ENCODE measurements at regions of chr1 and their contacts with region 1.

Region 1: GRCh38 chr1:156054500-156055280 is at the start of gene LAMTOR2:
- DNase-seq: peak; percentile 90 to 98 (median 94)
- ATAC-seq: peak; percentile 78
- H3K4me3 ChIP-seq: peak within 1 kb of the TSS; percentile 85 to 96
- H3K4me3 Mint-ChIP-seq: peak within 1 kb of the TSS; percentile 92
- H3K27ac ChIP-seq: peak within 1 kb of the TSS; percentile 54 to 79
- H3K27ac Mint-ChIP-seq: peak within 1 kb of the TSS; percentile 84
- H3K4me1 ChIP-seq: peaks cover 11% of the 10 kb centered on the region
- H3K4me1 Mint-ChIP-seq: peaks cover 31% of the 10 kb centered on the region
- H3K27me3 ChIP-seq: no peaks in the 10 kb centered on the region
- H3K27me3 Mint-ChIP-seq: no peaks in the 10 kb centered on the region
- CTCF ChIP-seq: no peak
- total RNA-seq, gene LAMTOR2: 6.7 to 8.3 TPM

Region 2: DNA sequence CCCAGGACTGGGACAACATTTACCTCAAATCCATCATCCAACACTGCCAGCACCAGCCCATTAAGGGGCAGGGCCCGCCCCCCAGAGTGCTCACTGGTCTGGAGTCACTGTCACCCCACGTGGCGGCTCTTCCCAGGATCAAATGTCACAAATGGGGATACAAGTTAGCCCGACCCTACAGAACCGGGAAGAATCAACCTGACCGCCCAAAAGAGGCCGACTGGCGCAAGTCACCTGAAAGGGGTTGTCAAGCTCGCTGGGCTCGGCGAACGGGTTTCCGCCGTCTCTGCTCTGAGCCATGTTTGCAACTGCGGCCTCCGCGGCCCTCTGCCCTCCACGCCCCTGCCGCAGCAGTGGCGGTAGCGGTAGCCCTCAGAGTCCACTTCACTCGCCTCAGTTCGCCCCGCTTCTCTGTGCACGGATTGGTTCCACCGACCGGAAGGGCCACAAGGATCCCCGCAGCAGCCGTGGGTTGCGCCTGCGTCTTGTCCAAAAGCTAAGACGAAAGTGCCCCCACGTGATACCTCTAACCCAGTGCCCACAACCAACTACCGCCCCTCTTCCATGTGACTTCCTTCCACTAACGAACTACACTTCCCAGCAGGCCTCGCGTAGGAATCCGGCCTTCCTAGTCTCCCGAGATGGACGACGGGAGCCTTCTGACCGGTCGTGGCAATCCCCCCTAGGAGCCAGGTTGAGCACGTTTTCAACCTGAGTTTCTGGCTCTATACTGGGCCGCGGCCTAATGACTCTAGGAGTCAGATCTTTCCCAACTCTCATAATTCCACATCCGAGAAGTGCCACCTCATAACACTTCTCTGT is 792.6 kb before region 1 on chr1 and contains the start of gene SCAMP3:
- CTCF ChIA-PET with region 1: no interaction called
- POLR2A ChIA-PET with region 1: no interaction called
- intact Hi-C with region 1: loop called in 1 of 2 experiments (anchors 5 kb)
- DNase-seq: peak; percentile 61 to 96 (median 84)
- ATAC-seq: peak; percentile 95
- H3K4me3 ChIP-seq: peak within 1 kb of the TSS; percentile 79 to 86
- H3K4me3 Mint-ChIP-seq: peak within 1 kb of the TSS; percentile 100
- H3K27ac ChIP-seq: peak within 1 kb of the TSS; percentile 72 to 85
- H3K27ac Mint-ChIP-seq: peak within 1 kb of the TSS; percentile 97
- H3K4me1 ChIP-seq: peaks cover 16% of the 10 kb centered on the region
- H3K4me1 Mint-ChIP-seq: peaks cover 29% of the 10 kb centered on the region
- H3K27me3 ChIP-seq: no peaks in the 10 kb centered on the region
- H3K27me3 Mint-ChIP-seq: no peaks in the 10 kb centered on the region
- CTCF ChIP-seq: no peak
- total RNA-seq, gene SCAMP3: 47.5 to 48.5 TPM

Region 3: GRCh38 chr1:155323798-155324610 is 730.7 kb before region 1 on chr1:
- CTCF ChIA-PET with region 1: no interaction called
- POLR2A ChIA-PET with region 1: no interaction called
- intact Hi-C with region 1: loop called in 1 of 2 experiments (anchors 2 kb)
- DNase-seq: peak; percentile 66 to 94 (median 85)
- ATAC-seq: peak; percentile 81
- H3K4me3 ChIP-seq: peak overlapping the region; percentile 89 to 100
- H3K4me3 Mint-ChIP-seq: peak overlapping the region; percentile 90
- H3K27ac ChIP-seq: peak overlapping the region; percentile 69 to 90
- H3K27ac Mint-ChIP-seq: peak overlapping the region; percentile 55
- H3K4me1 ChIP-seq: peaks cover 34% of the 10 kb centered on the region
- H3K4me1 Mint-ChIP-seq: peaks cover 33% of the 10 kb centered on the region
- H3K27me3 ChIP-seq: no peaks in the 10 kb centered on the region
- H3K27me3 Mint-ChIP-seq: no peaks in the 10 kb centered on the region
- CTCF ChIP-seq: no peak

Region 4: DNA sequence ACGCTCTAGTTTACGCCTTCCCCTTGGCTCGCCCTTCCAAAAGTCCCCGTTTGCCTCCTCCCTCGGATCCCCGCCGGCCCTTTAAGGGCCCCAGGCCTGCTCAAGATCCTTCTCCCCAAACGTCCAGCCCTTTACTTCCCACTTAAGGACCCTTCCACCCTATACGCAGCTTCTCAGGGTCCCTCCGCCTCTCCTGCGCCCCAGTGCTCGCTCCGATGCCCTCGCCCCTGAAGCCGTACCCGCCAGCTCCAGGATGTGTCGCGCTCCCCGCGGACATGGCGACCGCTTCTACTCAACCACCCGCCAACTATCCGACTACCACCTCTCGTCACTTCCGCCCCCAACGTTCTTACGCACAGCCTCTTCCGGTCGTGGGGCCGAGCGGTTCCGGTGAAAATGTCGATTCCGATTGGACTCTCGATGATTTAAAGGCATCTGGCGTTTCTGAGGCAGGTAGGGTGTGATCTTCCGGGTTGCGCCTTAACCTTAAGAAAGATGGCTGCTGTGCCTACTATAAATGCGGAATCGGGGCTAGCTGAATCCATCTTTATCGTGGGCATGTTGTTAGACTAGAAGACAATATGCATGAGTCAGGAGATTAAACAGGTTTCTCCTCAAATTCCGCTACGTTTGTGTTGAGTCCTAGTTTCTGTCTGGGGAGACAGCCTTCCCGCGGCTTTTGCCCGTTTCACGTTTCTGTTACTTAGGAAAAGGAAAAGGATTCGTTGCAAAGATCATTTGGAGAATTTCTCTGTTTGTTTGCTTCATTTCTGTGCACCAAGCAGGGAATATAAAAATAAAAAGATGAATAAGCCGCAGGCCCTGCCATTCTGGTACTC is 120.4 kb before region 1 on chr1 and contains the start of gene KHDC4:
- CTCF ChIA-PET with region 1: no interaction called
- POLR2A ChIA-PET with region 1: no interaction called
- intact Hi-C with region 1: loop called (anchors 1 kb)
- DNase-seq: peak; percentile 88 to 100 (median 93)
- ATAC-seq: peak; percentile 92
- H3K4me3 ChIP-seq: peak within 1 kb of the TSS; percentile 83 to 96
- H3K4me3 Mint-ChIP-seq: no peak within 1 kb of the TSS
- H3K27ac ChIP-seq: peak within 1 kb of the TSS; percentile 89 to 98
- H3K27ac Mint-ChIP-seq: no peak within 1 kb of the TSS
- H3K4me1 ChIP-seq: peaks cover 39% of the 10 kb centered on the region
- H3K4me1 Mint-ChIP-seq: peaks cover 34% of the 10 kb centered on the region
- H3K27me3 ChIP-seq: no peaks in the 10 kb centered on the region
- H3K27me3 Mint-ChIP-seq: no peaks in the 10 kb centered on the region
- CTCF ChIP-seq: peak; percentile 32
- total RNA-seq, gene KHDC4: 47.4 to 54.6 TPM

Region 5: DNA sequence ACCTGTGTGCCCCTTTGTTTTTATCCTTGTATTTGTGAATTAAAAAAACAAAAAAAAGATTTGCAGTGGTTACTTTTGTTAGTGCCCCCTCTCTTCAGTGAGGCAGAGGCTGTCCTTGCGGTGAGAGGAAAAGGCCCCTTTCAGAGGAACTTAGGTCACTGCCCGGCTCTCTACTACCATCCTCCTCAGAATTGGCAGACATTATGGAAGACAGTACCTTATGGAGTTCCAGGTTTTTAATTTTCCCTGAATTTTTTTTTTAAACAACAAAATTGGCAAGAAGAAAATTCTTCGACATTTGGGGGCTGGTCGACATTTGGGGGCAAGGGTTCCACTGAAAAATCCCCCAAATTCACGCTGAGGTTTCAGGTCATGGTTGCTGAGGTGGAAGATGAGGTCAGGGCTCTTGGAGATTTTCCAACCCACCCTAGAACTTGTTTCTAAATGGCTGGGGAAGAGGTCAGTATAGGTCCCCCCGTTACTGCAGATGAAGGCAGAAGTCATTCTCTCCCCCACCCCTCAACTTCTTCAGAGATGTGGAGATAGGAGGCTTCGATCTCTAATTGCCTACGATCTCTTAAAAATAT is 108.0 kb before region 1 on chr1:
- CTCF ChIA-PET with region 1: no interaction called
- POLR2A ChIA-PET with region 1: no interaction called
- intact Hi-C with region 1: no loop called
- DNase-seq: peak in 2 of 9 experiments; percentile 30 to 49
- ATAC-seq: no peak
- H3K4me3 ChIP-seq: no peak overlapping the region
- H3K4me3 Mint-ChIP-seq: no peak overlapping the region
- H3K27ac ChIP-seq: peak overlapping the region; percentile 44 to 81
- H3K27ac Mint-ChIP-seq: peak overlapping the region; percentile 95
- H3K4me1 ChIP-seq: peaks cover 31% of the 10 kb centered on the region
- H3K4me1 Mint-ChIP-seq: peaks cover 39% of the 10 kb centered on the region
- H3K27me3 ChIP-seq: no peaks in the 10 kb centered on the region
- H3K27me3 Mint-ChIP-seq: no peaks in the 10 kb centered on the region
- CTCF ChIP-seq: no peak

Region 6: DNA sequence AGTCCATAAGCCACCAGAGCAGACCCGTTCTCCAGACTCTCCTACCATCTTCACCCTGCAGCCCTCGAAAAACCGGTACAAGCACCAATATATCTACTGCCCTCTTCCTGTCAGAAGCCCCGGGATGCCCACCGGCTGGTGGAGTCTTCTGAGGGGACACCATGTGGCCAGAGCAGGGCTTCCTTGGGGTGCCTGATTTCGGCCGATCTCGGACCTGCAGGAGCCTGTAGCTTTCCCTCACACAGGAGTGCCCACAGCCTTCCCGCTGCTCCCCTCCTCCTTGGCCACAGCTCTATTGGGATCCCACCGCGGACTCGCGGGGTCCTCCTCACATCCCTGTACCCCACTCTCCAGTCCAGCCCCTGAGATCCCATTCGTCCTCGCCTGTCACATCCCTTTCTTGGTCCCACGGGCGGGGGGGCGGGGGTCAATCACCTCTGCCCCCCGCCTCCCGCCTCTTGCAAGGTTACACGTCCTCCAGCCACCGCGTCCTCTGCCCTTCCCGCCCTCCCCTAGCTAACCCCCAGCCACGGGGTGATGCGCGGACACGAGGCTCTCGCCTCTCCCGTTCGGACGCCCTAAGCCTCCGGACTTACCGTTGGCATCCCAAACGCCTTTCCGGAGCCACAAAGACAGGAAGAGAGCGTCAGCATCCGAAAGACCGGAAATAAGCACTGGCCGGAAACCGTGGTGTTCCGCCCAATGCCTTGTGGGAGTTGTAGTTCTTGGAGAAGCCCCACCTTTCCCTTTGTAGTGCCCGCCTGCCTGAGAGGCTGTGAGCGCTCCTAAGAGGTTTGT is 34.2 kb before region 1 on chr1 and contains the start of gene SSR2:
- CTCF ChIA-PET with region 1: interaction called, 9 read pairs
- POLR2A ChIA-PET with region 1: no interaction called
- intact Hi-C with region 1: loop called (anchors 1 kb)
- DNase-seq: peak; percentile 67 to 94 (median 84)
- ATAC-seq: peak; percentile 99
- H3K4me3 ChIP-seq: peak within 1 kb of the TSS; percentile 77 to 83
- H3K4me3 Mint-ChIP-seq: peak within 1 kb of the TSS; percentile 98
- H3K27ac ChIP-seq: peak within 1 kb of the TSS; percentile 61 to 64
- H3K27ac Mint-ChIP-seq: peak within 1 kb of the TSS; percentile 96
- H3K4me1 ChIP-seq: peaks cover 15% of the 10 kb centered on the region
- H3K4me1 Mint-ChIP-seq: peaks cover 30% of the 10 kb centered on the region
- H3K27me3 ChIP-seq: peaks cover 0 to 5% of the 10 kb centered on the region in 2 experiments
- H3K27me3 Mint-ChIP-seq: peaks cover 2% of the 10 kb centered on the region
- CTCF ChIP-seq: no peak
- total RNA-seq, gene SSR2: 208 to 212 TPM

Region 7: DNA sequence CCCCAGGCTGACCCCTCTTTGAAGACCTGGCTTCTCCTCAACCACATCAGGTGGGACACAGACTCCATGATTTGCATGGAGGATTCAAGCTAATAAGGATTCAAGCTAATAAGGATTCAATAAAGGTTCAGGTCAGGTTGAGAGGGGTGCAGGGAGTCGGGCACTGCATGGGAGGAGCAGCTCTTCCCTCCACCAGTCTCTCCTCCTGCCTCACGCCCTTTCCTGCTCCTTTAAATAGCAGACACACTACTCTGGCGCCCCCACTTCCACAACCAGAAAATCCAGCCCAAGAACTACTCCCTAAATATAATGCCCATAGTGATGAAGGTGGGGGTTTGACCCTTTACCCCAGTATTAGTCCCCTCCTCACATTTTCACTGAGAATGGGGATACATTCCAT is 20.5 kb after region 1 on chr1:
- CTCF ChIA-PET with region 1: no interaction called
- POLR2A ChIA-PET with region 1: no interaction called
- intact Hi-C with region 1: no loop called
- DNase-seq: no peak
- ATAC-seq: no peak
- H3K4me3 ChIP-seq: no peak overlapping the region
- H3K4me3 Mint-ChIP-seq: no peak overlapping the region
- H3K27ac ChIP-seq: no peak overlapping the region
- H3K27ac Mint-ChIP-seq: no peak overlapping the region
- H3K4me1 ChIP-seq: no peaks in the 10 kb centered on the region
- H3K4me1 Mint-ChIP-seq: peaks cover 3% of the 10 kb centered on the region
- H3K27me3 ChIP-seq: no peaks in the 10 kb centered on the region
- H3K27me3 Mint-ChIP-seq: no peaks in the 10 kb centered on the region
- CTCF ChIP-seq: no peak

Region 8: GRCh38 chr1:156193488-156194299 is 139.0 kb after region 1 on chr1 and contains the start of gene SLC25A44:
- CTCF ChIA-PET with region 1: no interaction called
- POLR2A ChIA-PET with region 1: no interaction called
- intact Hi-C with region 1: loop called in 1 of 2 experiments (anchors 1 kb)
- DNase-seq: peak; percentile 89 to 99 (median 97)
- ATAC-seq: peak; percentile 99
- H3K4me3 ChIP-seq: peak within 1 kb of the TSS; percentile 78 to 88
- H3K4me3 Mint-ChIP-seq: peak within 1 kb of the TSS; percentile 100
- H3K27ac ChIP-seq: peak within 1 kb of the TSS; percentile 67 to 85
- H3K27ac Mint-ChIP-seq: peak within 1 kb of the TSS; percentile 95
- H3K4me1 ChIP-seq: peaks cover 13% of the 10 kb centered on the region
- H3K4me1 Mint-ChIP-seq: peaks cover 47% of the 10 kb centered on the region
- H3K27me3 ChIP-seq: no peaks in the 10 kb centered on the region
- H3K27me3 Mint-ChIP-seq: no peaks in the 10 kb centered on the region
- CTCF ChIP-seq: peak; percentile 13
- total RNA-seq, gene SLC25A44: 12.1 to 12.6 TPM

Region 9: DNA sequence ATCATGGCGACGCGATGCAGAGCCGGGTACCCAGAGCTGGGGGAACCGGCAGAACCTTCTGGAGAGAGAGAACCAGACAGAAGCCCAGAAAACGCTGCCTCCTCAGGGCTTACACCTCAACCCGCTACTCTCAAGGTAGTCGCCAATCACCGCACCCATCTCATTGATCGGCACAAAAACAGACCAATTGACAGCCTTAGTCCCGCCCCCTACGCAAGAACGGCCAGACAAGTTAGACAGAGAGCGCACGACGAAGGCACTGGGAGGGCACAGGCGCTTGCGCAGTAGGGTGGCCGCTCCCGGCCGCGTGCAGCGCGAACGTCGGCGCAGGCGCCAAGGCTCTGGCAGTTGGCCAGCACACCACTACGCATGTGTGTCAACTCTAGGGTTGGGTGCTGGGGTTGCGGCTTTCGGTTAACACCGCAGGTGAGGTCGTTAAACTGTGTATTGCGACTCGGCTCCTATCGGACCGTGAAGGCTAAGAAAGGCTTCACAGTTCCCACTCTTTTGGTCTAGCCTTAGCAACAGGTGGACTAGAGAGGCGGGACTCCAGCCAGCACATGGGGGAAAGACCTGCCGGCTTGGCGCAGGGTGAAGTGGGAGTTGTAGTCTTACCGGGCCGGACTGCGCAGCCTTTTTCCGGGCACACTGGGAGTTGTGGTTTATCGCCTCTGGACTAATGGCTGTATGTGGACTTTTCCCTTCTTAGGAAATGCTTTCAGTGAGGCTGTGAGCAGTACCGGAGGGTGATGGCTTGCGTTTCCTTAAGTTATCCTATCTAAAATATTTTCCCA is 283.7 kb after region 1 on chr1 and contains the starts of genes CCT3 and TSACC:
- CTCF ChIA-PET with region 1: no interaction called
- POLR2A ChIA-PET with region 1: interaction called, 3 read pairs
- intact Hi-C with region 1: loop called (anchors 1 kb)
- DNase-seq: peak; percentile 97 to 100 (median 99)
- ATAC-seq: peak; percentile 95
- H3K4me3 ChIP-seq: peak within 1 kb of the TSS; percentile 69 to 85
- H3K4me3 Mint-ChIP-seq: peak within 1 kb of the TSS; percentile 95
- H3K27ac ChIP-seq: peak within 1 kb of the TSS; percentile 61 to 92
- H3K27ac Mint-ChIP-seq: peak within 1 kb of the TSS; percentile 95
- H3K4me1 ChIP-seq: peaks cover 25% of the 10 kb centered on the region
- H3K4me1 Mint-ChIP-seq: peaks cover 39% of the 10 kb centered on the region
- H3K27me3 ChIP-seq: no peaks in the 10 kb centered on the region
- H3K27me3 Mint-ChIP-seq: no peaks in the 10 kb centered on the region
- CTCF ChIP-seq: no peak
- total RNA-seq, gene CCT3: 49.2 to 53.4 TPM
- total RNA-seq, gene TSACC: 0.46 TPM in 1 of 2 experiments, not detected in the other

Measured in CD8-positive, alpha-beta T cell (primary cell).